ENCODE measurements at regions of chr1 and their contacts with region 1.

Region 1: GRCh38 chr1:236759252-236759859 is 35.7 kb upstream of the MTR start:
- DNase-seq: no peak
- H3K4me3 ChIP-seq: no peak overlapping the region
- CTCF ChIP-seq: peak; percentile 56

Region 2: GRCh38 chr1:236774926-236775325 is 15.6 kb after region 1 on chr1:
- CTCF ChIA-PET with region 1: interaction called, 16 read pairs
- POLR2A ChIA-PET with region 1: no interaction called
- DNase-seq: no peak
- H3K4me3 ChIP-seq: no peak overlapping the region
- CTCF ChIP-seq: peak; percentile 16

Region 3: GRCh38 chr1:236862615-236863211 is 103.4 kb after region 1 on chr1:
- CTCF ChIA-PET with region 1: interaction called, 16 read pairs
- POLR2A ChIA-PET with region 1: no interaction called
- DNase-seq: no peak
- H3K4me3 ChIP-seq: no peak overlapping the region
- CTCF ChIP-seq: no peak

Measured in AG04449 (cell line).